Activated CD8-positive, alpha-beta T cell treated with anti-CD3 and anti-CD28 coated beads, Interleukin-2, amount 10 ng/mL, durations not matched to agents 7 days and 5 days (primary cell): ENCODE measurements at regions of chr19 and their contacts with region 1.

Region 1: GRCh38 chr19:39412100-39412866 is at the start of gene PLEKHG2:
- DNase-seq: peak; percentile 98
- ATAC-seq: peak; percentile 63
- H3K4me3 Mint-ChIP-seq: peak within 1 kb of the TSS; percentile 97
- H3K27ac Mint-ChIP-seq: peak within 1 kb of the TSS; percentile 89
- H3K4me1 Mint-ChIP-seq: peaks cover 37% of the 10 kb centered on the region
- H3K27me3 Mint-ChIP-seq: no peaks in the 10 kb centered on the region
- total RNA-seq, gene PLEKHG2: 64.4 to 68.5 TPM

Region 2: GRCh38 chr19:39335168-39335548 is 77.1 kb before region 1 on chr19:
- CTCF ChIA-PET with region 1: interaction called, 17 read pairs
- POLR2A ChIA-PET with region 1: interaction called, 5 read pairs
- DNase-seq: peak; percentile 57
- ATAC-seq: peak; percentile 55
- H3K4me3 Mint-ChIP-seq: peak overlapping the region; percentile 100
- H3K27ac Mint-ChIP-seq: peak overlapping the region; percentile 98
- H3K4me1 Mint-ChIP-seq: peaks cover 65% of the 10 kb centered on the region
- H3K27me3 Mint-ChIP-seq: no peaks in the 10 kb centered on the region

Region 3: GRCh38 chr19:39390755-39391592 is 21.3 kb before region 1 on chr19 and contains the starts of genes MED29 and PAF1:
- CTCF ChIA-PET with region 1: interaction called, 145 read pairs
- POLR2A ChIA-PET with region 1: interaction called, 100 read pairs
- DNase-seq: peak; percentile 99
- ATAC-seq: peak; percentile 95
- H3K4me3 Mint-ChIP-seq: peak within 1 kb of the TSS; percentile 95
- H3K27ac Mint-ChIP-seq: peak within 1 kb of the TSS; percentile 100
- H3K4me1 Mint-ChIP-seq: peaks cover 45% of the 10 kb centered on the region
- H3K27me3 Mint-ChIP-seq: no peaks in the 10 kb centered on the region
- total RNA-seq, gene MED29: 32.6 to 39.3 TPM
- total RNA-seq, gene PAF1: 48.2 to 48.9 TPM

Region 4: GRCh38 chr19:39397360-39398296 is 14.7 kb before region 1 on chr19:
- CTCF ChIA-PET with region 1: interaction called, 145 read pairs
- POLR2A ChIA-PET with region 1: interaction called, 100 read pairs
- DNase-seq: peak; percentile 95
- ATAC-seq: peak; percentile 70
- H3K4me3 Mint-ChIP-seq: peak overlapping the region; percentile 2
- H3K27ac Mint-ChIP-seq: peak overlapping the region; percentile 82
- H3K4me1 Mint-ChIP-seq: peaks cover 70% of the 10 kb centered on the region
- H3K27me3 Mint-ChIP-seq: no peaks in the 10 kb centered on the region

Region 5: DNA sequence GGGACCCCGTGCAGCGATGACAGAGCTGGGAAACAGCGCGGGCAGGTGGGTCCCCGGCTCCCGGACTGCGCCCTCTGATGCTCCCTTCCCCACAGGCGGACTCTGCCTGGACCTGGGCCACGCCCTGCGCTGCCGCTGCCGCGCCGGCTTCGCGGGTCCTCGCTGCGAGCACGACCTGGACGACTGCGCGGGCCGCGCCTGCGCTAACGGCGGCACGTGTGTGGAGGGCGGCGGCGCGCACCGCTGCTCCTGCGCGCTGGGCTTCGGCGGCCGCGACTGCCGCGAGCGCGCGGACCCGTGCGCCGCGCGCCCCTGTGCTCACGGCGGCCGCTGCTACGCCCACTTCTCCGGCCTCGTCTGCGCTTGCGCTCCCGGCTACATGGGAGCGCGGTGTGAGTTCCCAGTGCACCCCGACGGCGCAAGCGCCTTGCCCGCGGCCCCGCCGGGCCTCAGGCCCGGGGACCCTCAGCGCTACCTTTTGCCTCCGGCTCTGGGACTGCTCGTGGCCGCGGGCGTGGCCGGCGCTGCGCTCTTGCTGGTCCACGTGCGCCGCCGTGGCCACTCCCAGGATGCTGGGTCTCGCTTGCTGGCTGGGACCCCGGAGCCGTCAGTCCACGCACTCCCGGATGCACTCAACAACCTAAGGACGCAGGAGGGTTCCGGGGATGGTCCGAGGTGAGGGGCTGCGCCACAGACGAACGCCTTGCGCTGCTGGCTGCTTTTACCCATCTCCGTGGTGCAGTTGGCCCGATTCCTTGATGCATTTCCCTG is 94.8 kb after region 1 on chr19:
- CTCF ChIA-PET with region 1: no interaction called
- POLR2A ChIA-PET with region 1: no interaction called
- DNase-seq: peak; percentile 65
- ATAC-seq: peak; percentile 82
- H3K4me3 Mint-ChIP-seq: peak overlapping the region; percentile 75
- H3K27ac Mint-ChIP-seq: no peak overlapping the region
- H3K4me1 Mint-ChIP-seq: peaks cover 30% of the 10 kb centered on the region
- H3K27me3 Mint-ChIP-seq: peaks cover 36% of the 10 kb centered on the region